ENCODE measurements at regions of chr16 and their contacts with region 1.

Region 1: DNA sequence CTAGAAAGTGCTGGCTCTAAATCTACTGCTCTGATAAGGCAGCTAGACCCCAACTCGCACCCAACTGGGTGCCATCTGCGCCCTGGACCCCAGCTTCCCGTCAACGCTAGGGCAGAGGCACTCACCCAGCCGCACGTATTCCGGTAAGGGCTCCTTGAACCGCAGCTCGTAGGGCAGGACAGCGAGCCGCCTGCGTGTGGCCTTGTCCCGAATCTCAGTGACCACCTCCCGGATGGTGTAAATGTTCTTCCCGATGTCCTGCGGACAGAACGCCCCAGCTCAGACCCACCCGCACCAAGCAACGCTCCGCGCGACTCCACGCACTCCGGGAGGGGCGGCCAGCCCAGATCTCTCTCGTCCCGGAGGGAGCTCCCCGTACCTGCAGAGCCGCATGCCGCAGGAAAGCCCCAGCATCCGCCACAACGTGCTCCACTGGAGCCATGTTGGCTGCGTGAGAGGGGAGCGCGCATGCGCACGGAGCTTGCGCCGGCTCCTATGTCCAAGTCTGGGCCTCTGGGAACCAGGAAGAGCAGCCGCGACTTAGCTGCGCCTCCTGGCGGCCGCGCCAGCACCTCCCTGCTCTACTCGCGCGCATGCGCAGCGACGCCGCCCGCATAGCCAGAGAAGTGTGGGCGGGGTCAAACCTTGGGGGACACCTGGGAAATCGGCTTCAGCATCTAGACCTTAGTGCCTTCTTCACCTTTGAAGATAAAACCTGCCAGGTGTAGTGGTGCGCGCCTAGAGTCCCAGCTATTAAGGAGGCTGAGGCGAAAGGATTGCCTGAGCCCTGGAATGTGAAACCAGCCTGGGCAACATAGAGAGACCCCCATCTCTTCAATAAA is at the start of gene NOB1:
- DNase-seq: peak; percentile 91 to 94
- ATAC-seq: peak; percentile 96 to 99
- H3K4me3 ChIP-seq: peak within 1 kb of the TSS; percentile 77 to 95 (median 90)
- H3K27ac ChIP-seq: peak within 1 kb of the TSS; percentile 75 to 86 (median 78)
- H3K4me1 ChIP-seq: peaks cover 12 to 16% of the 10 kb centered on the region in 2 donors
- H3K27me3 ChIP-seq: no peaks in the 10 kb centered on the region
- CTCF ChIP-seq: peak; percentile 98 to 99 (median 99)
- POLR2A ChIP-seq: peak in 1 of 2 donors; percentile 44
- total RNA-seq, gene NOB1: 19.2 to 30.9 (median 24.2) TPM

Region 2: DNA sequence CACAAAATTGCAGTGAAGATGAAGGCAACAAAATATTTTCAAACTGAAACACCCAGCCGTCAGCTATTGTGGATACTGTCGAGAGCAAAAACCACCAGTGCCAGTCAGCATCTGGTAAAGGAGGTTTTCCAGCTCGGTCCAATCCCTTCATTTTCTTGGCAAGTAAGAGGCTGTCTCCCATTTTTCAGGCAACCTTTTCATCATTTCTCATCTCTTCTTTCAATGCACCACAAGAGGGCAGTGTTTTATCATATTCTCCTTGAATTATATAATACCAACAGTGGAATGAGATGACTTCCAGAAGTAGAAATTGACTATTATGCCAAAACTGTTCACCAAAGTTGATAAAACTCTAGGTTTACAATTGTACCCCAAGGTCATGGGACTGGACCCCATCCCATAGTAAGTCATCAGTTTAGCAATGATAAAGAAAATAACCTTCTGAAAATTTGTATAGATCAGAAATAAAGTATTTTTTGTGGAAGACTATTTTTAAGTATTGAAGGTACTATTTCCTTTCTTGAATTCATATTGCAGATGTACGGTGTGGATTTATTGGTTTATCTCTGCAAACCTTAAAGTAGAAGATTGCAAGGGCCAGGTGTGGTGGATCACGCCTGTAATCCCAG is 45.1 kb before region 1 on chr16:
- in situ Hi-C with region 1: loop called in 1 of 4 experiments (anchors 5 kb)
- intact Hi-C with region 1: loop called (anchors 1 kb)
- DNase-seq: no peak
- ATAC-seq: peak in 1 of 2 donors; percentile 74
- H3K4me3 ChIP-seq: no peak overlapping the region
- H3K27ac ChIP-seq: no peak overlapping the region
- H3K4me1 ChIP-seq: no peaks in the 10 kb centered on the region
- H3K27me3 ChIP-seq: no peaks in the 10 kb centered on the region
- CTCF ChIP-seq: peak; percentile 59 to 73 (median 70)
- POLR2A ChIP-seq: no peak

Region 3: GRCh38 chr16:69717066-69717465 is 37.6 kb before region 1 on chr16:
- in situ Hi-C with region 1: loop called in 3 of 4 experiments (anchors 5 kb)
- intact Hi-C with region 1: no loop called
- DNase-seq: no peak
- ATAC-seq: no peak
- H3K4me3 ChIP-seq: no peak overlapping the region
- H3K27ac ChIP-seq: no peak overlapping the region
- H3K4me1 ChIP-seq: no peaks in the 10 kb centered on the region
- H3K27me3 ChIP-seq: no peaks in the 10 kb centered on the region
- CTCF ChIP-seq: no peak
- POLR2A ChIP-seq: no peak

Region 4: GRCh38 chr16:69726296-69727060 is 28.2 kb before region 1 on chr16 and contains the start of gene NQO1:
- in situ Hi-C with region 1: no loop called
- intact Hi-C with region 1: loop called (anchors 2 kb)
- DNase-seq: peak; percentile 86 to 87
- ATAC-seq: peak; percentile 76 to 84
- H3K4me3 ChIP-seq: peak within 1 kb of the TSS; percentile 54 to 87 (median 64)
- H3K27ac ChIP-seq: peak within 1 kb of the TSS; percentile 66 to 80 (median 76)
- H3K4me1 ChIP-seq: peaks cover 19 to 27% of the 10 kb centered on the region in 2 donors
- H3K27me3 ChIP-seq: no peaks in the 10 kb centered on the region
- CTCF ChIP-seq: no peak
- POLR2A ChIP-seq: peak; percentile 46 to 61
- total RNA-seq, gene NQO1: 39.1 to 59.8 (median 49.4) TPM